ENCODE measurements at regions of chr10 and their contacts with region 1.

Region 1: GRCh38 chr10:76686201-76686600 is 951.4 kb downstream of the KCNMA1 start:
- DNase-seq: no peak

Region 2: DNA sequence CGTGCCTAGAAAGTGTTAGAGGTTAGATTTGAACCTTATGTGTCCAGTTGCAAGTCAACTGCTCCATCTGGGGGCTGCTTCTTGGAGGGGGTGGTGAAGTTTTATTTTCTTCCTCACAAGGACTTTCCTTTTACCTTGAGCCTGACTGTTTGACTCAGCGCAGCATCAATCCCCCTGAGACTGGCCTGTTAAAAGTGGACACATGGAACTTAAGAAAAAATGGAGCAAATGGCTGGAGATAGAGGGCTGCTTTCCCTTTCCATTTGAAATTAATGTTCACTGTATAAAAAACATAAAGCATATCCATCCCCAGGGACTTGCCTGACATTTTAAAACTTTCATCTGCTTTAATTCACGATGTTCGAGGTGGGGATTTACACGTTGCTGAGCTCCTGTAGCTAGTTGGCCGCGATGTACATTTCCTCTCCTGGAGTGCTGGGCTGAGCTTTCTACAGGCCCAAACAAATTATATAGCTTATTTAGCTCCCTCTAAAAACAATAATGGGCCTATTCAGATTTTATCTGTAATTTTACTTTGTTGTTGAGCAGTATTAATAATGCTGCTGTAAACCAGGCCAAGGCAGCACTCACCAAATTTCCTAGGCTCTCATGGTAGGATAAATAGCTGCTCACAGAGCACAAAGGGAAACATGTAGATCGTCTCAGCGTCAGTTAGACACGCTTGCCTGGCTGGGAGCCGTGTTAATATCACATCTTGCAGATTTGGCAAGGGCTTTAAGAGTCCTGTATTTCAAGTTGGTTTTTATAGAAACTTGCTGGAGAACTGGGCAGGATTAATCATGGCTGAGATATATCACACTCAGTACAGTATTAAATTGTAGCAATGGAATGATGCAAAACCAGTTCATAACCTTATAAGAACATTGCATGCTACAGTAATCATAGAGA is 1003.3 kb before region 1 on chr10:
- intact Hi-C with region 1: no loop called
- DNase-seq: no peak

Region 3: DNA sequence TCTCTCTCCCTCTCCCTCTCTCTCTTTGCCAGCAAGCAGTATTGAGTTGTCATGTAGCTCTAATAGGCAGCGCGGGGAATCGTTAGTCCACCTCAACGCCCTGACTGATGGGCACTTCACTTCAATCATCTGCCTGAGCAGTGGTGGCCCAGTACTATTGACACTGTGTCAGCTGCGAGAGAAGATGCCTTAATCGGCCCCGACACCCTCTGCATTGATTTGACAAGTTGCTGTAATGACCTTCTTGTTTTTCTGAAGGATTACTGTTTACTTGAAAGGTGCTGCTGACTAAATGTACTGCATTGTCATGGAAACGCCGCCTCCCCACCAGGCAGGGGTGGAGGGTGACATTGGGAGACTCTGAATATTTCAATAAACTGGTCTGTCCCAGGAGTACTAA is 37.6 kb after region 1 on chr10:
- intact Hi-C with region 1: loop called in 1 of 2 experiments (anchors 1 kb)
- DNase-seq: no peak